Transverse colon (tissue), 4 donors: ENCODE measurements at regions of chr20 and their contacts with region 1.

Region 1: GRCh38 chr20:44388466-44389023 is 33.0 kb downstream of the HNF4A start:
- DNase-seq: peak; percentile 85
- H3K4me3 ChIP-seq: no peak overlapping the region
- H3K27ac ChIP-seq: peak overlapping the region; percentile 5 to 58 (median 48)
- H3K4me1 ChIP-seq: peaks cover 0 to 43% (median 26%) of the 10 kb centered on the region in 4 donors
- H3K27me3 ChIP-seq: peaks cover 14% of the 10 kb centered on the region
- CTCF ChIP-seq: peak; percentile 67 to 90 (median 74)
- EP300 ChIP-seq: no peak
- POLR2A ChIP-seq: no peak

Region 2: GRCh38 chr20:44180814-44181213 is 207.7 kb before region 1 on chr20:
- in situ Hi-C with region 1: no loop called
- intact Hi-C with region 1: no loop called
- DNase-seq: peak; percentile 34
- H3K4me3 ChIP-seq: peak overlapping the region in 1 of 4 donors; percentile 2
- H3K27ac ChIP-seq: peak overlapping the region; percentile 70 to 91 (median 86)
- H3K4me1 ChIP-seq: peaks cover 5 to 20% (median 14%) of the 10 kb centered on the region in 4 donors
- H3K27me3 ChIP-seq: no peaks in the 10 kb centered on the region
- CTCF ChIP-seq: no peak
- EP300 ChIP-seq: peak; percentile 14
- POLR2A ChIP-seq: no peak

Region 3: GRCh38 chr20:44271915-44272663 is 116.5 kb before region 1 on chr20:
- in situ Hi-C with region 1: no loop called
- intact Hi-C with region 1: no loop called
- DNase-seq: no peak
- H3K4me3 ChIP-seq: no peak overlapping the region
- H3K27ac ChIP-seq: no peak overlapping the region
- H3K4me1 ChIP-seq: no peaks in the 10 kb centered on the region
- H3K27me3 ChIP-seq: no peaks in the 10 kb centered on the region
- CTCF ChIP-seq: peak in 1 of 5 experiments; percentile 5
- EP300 ChIP-seq: no peak
- POLR2A ChIP-seq: no peak

Region 4: DNA sequence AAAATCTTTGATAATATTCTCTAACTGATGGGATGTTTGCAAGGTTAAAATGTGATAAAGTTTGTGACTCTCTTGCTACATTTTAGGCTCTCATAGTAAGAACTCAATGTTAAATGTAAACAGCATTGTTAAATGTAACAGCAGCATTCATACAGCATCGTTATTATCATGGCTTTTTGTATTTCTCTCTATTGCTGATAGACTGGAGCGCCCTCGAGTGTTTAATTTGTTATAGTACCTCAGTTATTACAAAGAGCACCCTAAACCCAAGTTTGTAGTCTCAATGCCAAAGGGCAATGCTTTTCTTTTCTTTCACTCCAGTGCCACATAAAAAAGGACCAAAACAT is 72.2 kb after region 1 on chr20:
- in situ Hi-C with region 1: loop called in 1 of 4 experiments (anchors 5 kb)
- intact Hi-C with region 1: no loop called
- DNase-seq: no peak
- H3K4me3 ChIP-seq: no peak overlapping the region
- H3K27ac ChIP-seq: peak overlapping the region; percentile 64 to 82 (median 76)
- H3K4me1 ChIP-seq: peaks cover 3 to 37% (median 18%) of the 10 kb centered on the region in 4 donors
- H3K27me3 ChIP-seq: no peaks in the 10 kb centered on the region
- CTCF ChIP-seq: peak; percentile 12 to 68 (median 43)
- EP300 ChIP-seq: no peak
- POLR2A ChIP-seq: no peak

Region 5: DNA sequence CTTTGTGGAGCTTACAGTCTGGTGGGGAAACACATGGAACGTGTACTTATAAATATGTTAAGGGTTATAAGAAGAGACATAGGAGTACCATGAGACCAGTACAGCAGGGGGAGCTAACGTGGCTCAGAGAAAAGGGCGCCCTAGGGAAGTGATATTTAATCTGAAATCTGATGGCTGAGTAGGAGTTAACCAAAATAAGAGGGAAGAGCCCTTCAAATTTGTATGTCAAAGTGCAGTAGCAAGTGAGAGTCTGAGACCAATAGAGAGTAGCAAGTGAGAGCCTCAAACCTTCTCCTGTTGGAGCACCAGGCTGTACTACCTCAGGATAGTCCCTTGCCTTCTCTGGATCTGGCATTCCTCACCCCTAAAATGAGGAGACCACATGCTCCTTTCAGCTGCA is 187.8 kb after region 1 on chr20:
- in situ Hi-C with region 1: no loop called
- intact Hi-C with region 1: no loop called
- DNase-seq: no peak
- H3K4me3 ChIP-seq: no peak overlapping the region
- H3K27ac ChIP-seq: peak overlapping the region; percentile 32 to 85 (median 53)
- H3K4me1 ChIP-seq: peaks cover 5 to 57% (median 31%) of the 10 kb centered on the region in 4 donors
- H3K27me3 ChIP-seq: no peaks in the 10 kb centered on the region
- CTCF ChIP-seq: peak in 1 of 5 experiments; percentile 12
- EP300 ChIP-seq: no peak
- POLR2A ChIP-seq: no peak

Region 6: GRCh38 chr20:44609511-44610312 is 221.2 kb after region 1 on chr20:
- in situ Hi-C with region 1: loop called (anchors 10 to 25 kb)
- intact Hi-C with region 1: no loop called
- DNase-seq: peak; percentile 93
- H3K4me3 ChIP-seq: peak overlapping the region in 1 of 4 donors; percentile 29
- H3K27ac ChIP-seq: peak overlapping the region; percentile 82 to 90 (median 86)
- H3K4me1 ChIP-seq: peaks cover 10 to 34% (median 13%) of the 10 kb centered on the region in 4 donors
- H3K27me3 ChIP-seq: no peaks in the 10 kb centered on the region
- CTCF ChIP-seq: peak; percentile 96 to 98 (median 97)
- EP300 ChIP-seq: no peak
- POLR2A ChIP-seq: no peak

Region 7: GRCh38 chr20:44733341-44734069 is 345.0 kb after region 1 on chr20:
- in situ Hi-C with region 1: no loop called
- intact Hi-C with region 1: loop called (anchors 10 kb)
- DNase-seq: peak; percentile 64
- H3K4me3 ChIP-seq: no peak overlapping the region
- H3K27ac ChIP-seq: no peak overlapping the region
- H3K4me1 ChIP-seq: peaks cover 0 to 6% (median 3%) of the 10 kb centered on the region in 4 donors
- H3K27me3 ChIP-seq: no peaks in the 10 kb centered on the region
- CTCF ChIP-seq: peak; percentile 80 to 87 (median 85)
- EP300 ChIP-seq: no peak
- POLR2A ChIP-seq: no peak